HepG2 (cell line): ENCODE measurements at regions of chr5 and their contacts with region 1.

Region 1: DNA sequence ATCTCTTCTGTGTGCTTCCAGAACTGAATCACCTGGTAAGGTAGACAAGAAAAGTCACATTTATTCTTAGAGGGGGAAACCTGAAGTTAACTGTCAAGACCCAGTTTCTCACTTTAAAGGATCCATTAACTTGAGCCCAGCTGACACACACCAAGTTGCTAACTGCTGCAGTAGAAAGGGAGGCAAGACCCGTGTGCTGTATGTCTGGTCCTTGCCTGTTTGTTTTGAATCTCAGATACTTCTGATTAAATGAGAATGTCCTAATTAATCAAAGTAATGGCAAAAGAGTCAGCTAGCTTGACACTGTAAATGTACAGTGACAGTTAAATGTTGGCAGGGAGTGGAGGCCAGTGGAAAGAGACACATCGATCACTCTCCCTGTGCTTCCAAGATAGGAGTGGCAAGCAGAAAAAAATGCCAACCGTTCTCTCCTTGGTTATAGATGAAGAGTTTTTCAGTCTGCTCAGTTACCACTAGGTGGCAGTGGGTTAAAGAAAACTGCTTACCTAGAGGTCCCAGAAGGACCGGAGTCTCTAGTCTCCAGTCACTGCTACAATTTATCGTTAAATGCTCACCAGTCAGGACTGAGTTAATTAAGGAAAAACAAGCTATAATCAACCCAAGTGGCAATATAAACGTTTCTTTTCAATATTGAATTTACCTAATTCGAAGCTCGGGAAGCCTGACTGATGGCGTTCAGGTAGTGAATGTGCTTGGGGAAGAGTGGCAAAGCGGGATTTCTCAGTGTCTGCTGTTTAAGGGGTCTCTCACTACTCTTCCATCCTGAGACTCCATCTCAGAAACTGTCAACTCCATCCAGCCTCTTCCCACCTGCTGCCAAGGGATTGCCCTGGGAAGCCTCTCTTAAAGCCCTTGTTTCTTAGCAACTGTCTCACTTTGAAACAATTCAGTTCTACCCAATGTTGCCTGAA is 18.4 kb downstream of the LSM11 start:
- DNase-seq: peak; percentile 60
- ATAC-seq: peak; percentile 98
- H3K4me3 ChIP-seq: no peak overlapping the region
- H3K27ac ChIP-seq: no peak overlapping the region
- H3K4me1 ChIP-seq: no peaks in the 10 kb centered on the region
- H3K27me3 ChIP-seq: no peaks in the 10 kb centered on the region
- CTCF ChIP-seq: peak; percentile 76
- EP300 ChIP-seq: no peak
- POLR2A ChIP-seq: no peak
- RAD21 ChIP-seq: peak; percentile 52; the same call in 1 of the 2 replicates

Region 2: DNA sequence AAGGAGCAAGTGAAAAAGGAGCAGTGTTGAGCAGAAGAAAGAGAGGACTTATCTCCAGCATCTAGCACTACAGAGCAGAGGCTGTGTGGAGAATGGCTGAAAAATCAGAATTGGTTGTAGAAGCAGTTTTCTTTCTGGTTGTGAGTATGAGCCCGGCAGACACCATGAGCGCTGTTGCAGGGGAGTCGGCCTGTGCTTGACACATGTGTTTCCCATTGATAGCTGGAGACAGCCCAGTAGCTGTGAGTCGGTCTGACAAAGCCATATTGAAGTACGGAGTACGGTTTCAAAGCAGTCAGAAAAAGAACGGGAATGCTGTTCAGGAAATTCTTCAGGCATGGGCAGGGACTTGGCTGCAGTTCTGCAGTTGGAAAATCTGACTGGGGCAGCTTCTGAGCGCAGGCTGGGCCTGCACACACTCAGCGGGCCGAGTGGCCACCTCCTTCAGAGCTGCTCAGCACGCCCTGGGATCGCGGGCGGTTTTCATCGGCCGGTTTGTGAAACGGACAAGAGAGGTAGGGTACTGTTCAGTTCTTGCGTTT is 1435.2 kb before region 1 on chr5 and contains the start of gene SGCD:
- CTCF ChIA-PET with region 1: no interaction called
- POLR2A ChIA-PET with region 1: no interaction called
- in situ Hi-C with region 1: no loop called
- intact Hi-C with region 1: no loop called
- DNase-seq: no peak
- ATAC-seq: peak; percentile 49; the same call in 2 of the 3 replicates
- H3K4me3 ChIP-seq: no peak within 1 kb of the TSS
- H3K27ac ChIP-seq: no peak within 1 kb of the TSS
- H3K4me1 ChIP-seq: no peaks in the 10 kb centered on the region
- H3K27me3 ChIP-seq: 0 out of 5 replicates have a peak, but pooled peaks cover 0 to 4% of the 10 kb centered on the region in 2 experiments
- CTCF ChIP-seq: no peak
- EP300 ChIP-seq: no peak
- POLR2A ChIP-seq: no peak
- RAD21 ChIP-seq: no peak
- total RNA-seq, gene SGCD: not detected in 2 replicates

Region 3: DNA sequence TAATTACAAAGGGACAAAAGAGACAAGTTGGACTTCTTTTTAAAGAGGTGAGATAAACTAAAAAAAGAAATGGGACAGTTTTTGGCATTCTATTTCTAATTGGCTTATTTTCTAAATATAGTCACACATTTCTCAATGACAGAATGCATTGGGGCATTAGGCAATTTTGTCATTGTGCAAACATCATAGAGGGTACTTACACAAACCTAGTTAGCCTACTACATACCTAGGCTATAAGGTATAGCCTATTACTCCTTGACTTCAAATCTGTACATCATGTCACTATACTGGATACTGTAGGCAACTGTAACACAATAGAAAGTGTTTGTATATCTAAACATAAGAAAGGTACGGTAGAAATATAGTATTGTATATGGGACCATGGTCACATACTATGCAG is 37.6 kb after region 1 on chr5:
- CTCF ChIA-PET with region 1: no interaction called
- POLR2A ChIA-PET with region 1: no interaction called
- in situ Hi-C with region 1: no loop called
- intact Hi-C with region 1: no loop called
- DNase-seq: no peak
- ATAC-seq: no peak
- H3K4me3 ChIP-seq: no peak overlapping the region
- H3K27ac ChIP-seq: no peak overlapping the region
- H3K4me1 ChIP-seq: no peaks in the 10 kb centered on the region
- H3K27me3 ChIP-seq: no peaks in the 10 kb centered on the region
- CTCF ChIP-seq: no peak
- EP300 ChIP-seq: no peak
- POLR2A ChIP-seq: no peak
- RAD21 ChIP-seq: no peak

Region 4: DNA sequence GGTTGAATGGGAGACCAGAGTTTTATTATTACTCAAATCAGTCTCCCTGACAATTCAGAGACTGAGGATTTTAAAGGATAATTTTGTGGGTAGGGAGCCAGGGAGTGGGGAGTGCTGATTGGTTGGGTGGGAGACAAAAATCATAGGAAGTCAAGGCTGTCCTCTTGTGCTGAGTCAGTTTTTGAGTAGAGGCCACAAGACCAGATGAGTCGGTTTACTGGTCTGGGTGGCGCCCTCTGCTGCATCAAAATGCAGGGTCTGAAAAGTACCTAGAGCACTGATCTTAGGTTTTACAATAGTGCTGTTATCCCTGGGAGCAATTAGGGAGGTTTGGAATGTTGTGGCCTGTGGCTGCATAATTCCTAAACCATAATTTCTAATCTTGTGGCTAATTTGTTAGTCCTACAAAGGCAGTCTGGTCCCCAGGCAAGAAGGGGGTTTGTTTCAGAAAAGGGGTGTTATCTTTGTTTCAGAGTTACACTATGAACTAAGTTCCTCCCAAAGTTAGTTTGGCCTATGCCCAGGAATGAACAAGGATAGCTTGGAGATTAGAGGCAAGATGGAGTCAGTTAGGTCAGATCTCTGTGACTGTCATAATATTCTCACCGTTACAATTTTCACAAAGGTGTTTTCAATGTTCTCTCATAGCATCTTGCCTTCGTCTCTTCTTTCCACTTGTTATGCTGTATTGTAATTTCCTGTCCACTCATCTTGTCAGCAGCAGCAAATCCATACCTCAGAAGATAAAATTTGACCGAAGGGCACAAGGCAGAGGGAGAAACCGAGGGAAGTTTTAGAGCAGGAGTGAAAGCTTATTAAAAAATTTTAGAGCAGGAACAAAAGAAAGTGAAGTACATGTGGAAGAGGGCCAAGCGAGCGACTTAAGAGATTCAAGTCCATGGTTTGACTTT is 156.2 kb after region 1 on chr5:
- CTCF ChIA-PET with region 1: no interaction called
- POLR2A ChIA-PET with region 1: no interaction called
- in situ Hi-C with region 1: no loop called
- intact Hi-C with region 1: no loop called
- DNase-seq: peak; percentile 58
- ATAC-seq: peak; percentile 92
- H3K4me3 ChIP-seq: no peak overlapping the region
- H3K27ac ChIP-seq: no peak overlapping the region
- H3K4me1 ChIP-seq: peaks cover 14% of the 10 kb centered on the region; the same call in 1 of the 2 replicates
- H3K27me3 ChIP-seq: no peaks in the 10 kb centered on the region; a peak in 1 of 5 replicates
- CTCF ChIP-seq: peak; percentile 66
- EP300 ChIP-seq: no peak
- POLR2A ChIP-seq: no peak
- RAD21 ChIP-seq: peak; percentile 58

Region 5: DNA sequence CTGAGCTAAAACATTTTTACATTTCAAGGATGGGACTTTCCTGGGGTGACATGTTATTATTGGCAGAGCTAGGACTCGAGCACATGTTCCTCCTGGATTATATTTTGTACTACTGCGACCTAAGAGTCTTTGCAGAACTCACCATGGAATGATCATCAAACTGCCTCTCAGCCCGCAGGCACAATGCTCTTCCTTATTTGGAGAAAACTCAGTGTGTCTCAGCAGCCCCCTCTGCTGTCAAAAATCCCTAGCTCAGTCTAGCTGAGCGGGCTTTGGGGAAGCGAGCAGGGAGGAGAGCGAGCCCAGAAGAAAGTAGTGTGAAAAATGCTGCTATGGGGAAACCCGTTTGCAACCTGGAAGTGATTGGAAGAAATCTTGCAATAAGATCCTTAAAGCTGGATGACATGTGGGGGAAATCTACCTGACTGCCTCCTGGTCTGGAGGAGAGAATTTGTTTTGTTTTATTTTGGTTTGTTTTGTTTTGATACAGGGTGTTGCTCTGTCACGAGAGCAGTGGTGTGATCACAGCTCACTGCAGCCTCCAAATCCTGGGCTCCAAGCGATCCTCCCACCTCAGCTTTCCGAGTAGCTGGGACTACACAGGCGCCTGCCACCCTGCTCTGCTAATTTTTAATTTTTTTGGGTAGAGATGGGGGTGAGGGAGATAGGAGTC is 186.9 kb after region 1 on chr5:
- CTCF ChIA-PET with region 1: interaction called, 8 read pairs
- POLR2A ChIA-PET with region 1: no interaction called
- in situ Hi-C with region 1: no loop called
- intact Hi-C with region 1: loop called (anchors 1 kb)
- DNase-seq: peak; percentile 92
- ATAC-seq: peak; percentile 100
- H3K4me3 ChIP-seq: no peak overlapping the region
- H3K27ac ChIP-seq: no peak overlapping the region
- H3K4me1 ChIP-seq: peaks cover 9% of the 10 kb centered on the region; the same call in 1 of the 2 replicates
- H3K27me3 ChIP-seq: no peaks in the 10 kb centered on the region; a peak in 1 of 5 replicates
- CTCF ChIP-seq: peak; percentile 90
- EP300 ChIP-seq: no peak
- POLR2A ChIP-seq: no peak
- RAD21 ChIP-seq: no peak; the same call in 1 of the 2 replicates

Region 6: DNA sequence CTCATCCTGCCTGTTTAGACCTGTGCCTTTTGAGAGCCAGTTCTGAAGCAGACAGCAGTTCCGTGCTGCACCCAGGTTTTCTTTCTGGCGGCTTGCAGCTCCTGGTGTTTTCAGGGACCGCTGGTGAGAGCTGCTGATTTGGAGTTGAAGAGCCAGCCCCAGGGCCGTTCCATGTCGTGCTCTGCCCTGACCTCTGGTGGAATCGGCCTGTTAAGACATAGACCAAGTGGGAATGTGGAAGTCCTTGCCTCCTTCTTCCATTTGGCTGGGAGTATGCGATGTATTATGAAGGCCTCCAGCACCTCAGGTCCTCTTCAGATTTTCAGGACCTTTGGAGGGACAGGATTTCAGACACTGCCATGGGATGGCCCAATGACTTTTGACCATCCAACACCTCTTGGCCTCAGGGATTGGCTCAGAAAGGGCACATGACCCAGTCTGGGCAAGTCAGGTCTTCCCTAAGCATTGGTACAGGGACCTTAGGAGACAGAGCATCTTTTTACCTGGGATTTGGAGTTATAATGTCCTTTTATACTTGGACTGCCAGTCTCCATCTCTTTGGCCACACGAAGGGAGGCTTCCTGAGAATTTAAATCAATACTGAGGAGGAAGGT is 233.1 kb after region 1 on chr5:
- CTCF ChIA-PET with region 1: interaction called, 6 read pairs
- POLR2A ChIA-PET with region 1: no interaction called
- in situ Hi-C with region 1: no loop called
- intact Hi-C with region 1: loop called (anchors 1 kb)
- DNase-seq: peak; percentile 41
- ATAC-seq: peak; percentile 100
- H3K4me3 ChIP-seq: peak overlapping the region in 1 of 3 experiments; percentile 23; a peak in 1 of 6 replicates
- H3K27ac ChIP-seq: no peak overlapping the region
- H3K4me1 ChIP-seq: peaks cover 6% of the 10 kb centered on the region; the same call in 1 of the 2 replicates
- H3K27me3 ChIP-seq: 0 out of 5 replicates have a peak, but pooled peaks cover 0 to 6% of the 10 kb centered on the region in 2 experiments
- CTCF ChIP-seq: peak; percentile 87
- EP300 ChIP-seq: no peak
- POLR2A ChIP-seq: no peak
- RAD21 ChIP-seq: peak; percentile 60; the same call in 1 of the 2 replicates

Region 7: DNA sequence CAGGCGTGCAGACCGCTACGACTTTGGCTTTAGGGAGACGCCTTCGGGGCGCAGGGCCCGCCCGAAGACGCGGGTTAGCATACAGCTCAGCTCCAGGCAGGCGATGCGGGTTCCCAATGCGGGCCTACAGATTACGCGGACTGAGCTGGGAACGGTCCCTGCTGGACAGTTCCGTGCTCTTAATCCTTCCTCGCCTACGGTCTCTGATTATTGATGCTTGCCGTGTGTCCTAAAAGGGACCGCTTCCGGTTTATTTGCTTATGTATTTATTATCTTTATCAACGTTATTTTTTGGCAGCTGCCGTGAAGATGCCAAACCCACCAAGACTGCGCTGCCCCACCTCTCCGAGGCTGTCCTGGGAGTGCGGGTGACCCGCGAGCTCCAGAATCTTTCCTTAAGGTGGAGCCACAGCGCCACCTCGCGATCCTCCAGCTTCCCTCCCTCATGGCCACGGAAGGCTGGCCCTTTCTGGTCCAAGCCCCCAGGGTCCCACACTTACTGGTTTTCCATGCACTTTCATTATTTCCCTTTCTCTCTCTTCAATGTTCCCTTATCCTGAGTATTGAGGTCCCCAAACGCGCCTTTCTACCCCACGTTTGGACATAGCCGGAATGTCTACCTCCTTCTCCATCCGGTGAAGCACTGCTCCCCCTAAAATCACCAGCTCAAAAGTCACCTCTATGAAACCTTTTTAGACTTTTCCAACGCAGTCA is 1344.8 kb after region 1 on chr5:
- CTCF ChIA-PET with region 1: no interaction called
- POLR2A ChIA-PET with region 1: no interaction called
- in situ Hi-C with region 1: no loop called
- intact Hi-C with region 1: loop called (anchors 2 kb)
- DNase-seq: peak; percentile 24
- ATAC-seq: peak; percentile 96
- H3K4me3 ChIP-seq: no peak overlapping the region
- H3K27ac ChIP-seq: no peak overlapping the region
- H3K4me1 ChIP-seq: no peaks in the 10 kb centered on the region
- H3K27me3 ChIP-seq: peaks cover 1 to 30% of the 10 kb centered on the region in 2 experiments
- CTCF ChIP-seq: peak; percentile 90
- EP300 ChIP-seq: no peak
- POLR2A ChIP-seq: no peak
- RAD21 ChIP-seq: peak; percentile 87